ENCODE measurements at regions of chr15 and their contacts with region 1.

Region 1: GRCh38 chr15:75785771-75786574 is 57.3 kb upstream of the UBE2Q2 start:
- DNase-seq: peak; percentile 35 to 59 (median 43)
- ATAC-seq: peak; percentile 54; the same call in 1 of the 3 replicates
- H3K4me3 ChIP-seq: no peak overlapping the region
- H3K27ac ChIP-seq: no peak overlapping the region
- H3K4me1 ChIP-seq: peaks cover 0 to 8% of the 10 kb centered on the region in 2 experiments; a peak in 2 of 5 replicates
- H3K27me3 ChIP-seq: peaks cover 12 to 45% of the 10 kb centered on the region in 2 experiments
- CTCF ChIP-seq: peak; percentile 72 to 91 (median 78)
- EP300 ChIP-seq: no peak
- POLR2A ChIP-seq: no peak
- RAD21 ChIP-seq: peak; percentile 61 to 78

Region 2: GRCh38 chr15:75732809-75733451 is 53.0 kb before region 1 on chr15:
- CTCF ChIA-PET with region 1: no interaction called
- POLR2A ChIA-PET with region 1: no interaction called
- in situ Hi-C with region 1: loop called (anchors 5 kb)
- intact Hi-C with region 1: no loop called
- DNase-seq: peak; percentile 69 to 79 (median 70)
- ATAC-seq: peak; percentile 91
- H3K4me3 ChIP-seq: no peak overlapping the region
- H3K27ac ChIP-seq: no peak overlapping the region
- H3K4me1 ChIP-seq: peaks cover 3 to 30% of the 10 kb centered on the region in 2 experiments
- H3K27me3 ChIP-seq: 0 out of 5 replicates have a peak, but pooled peaks cover 0 to 5% of the 10 kb centered on the region in 2 experiments
- CTCF ChIP-seq: peak; percentile 79 to 90 (median 82)
- EP300 ChIP-seq: no peak
- POLR2A ChIP-seq: no peak
- RAD21 ChIP-seq: peak; percentile 42 to 70

Region 3: DNA sequence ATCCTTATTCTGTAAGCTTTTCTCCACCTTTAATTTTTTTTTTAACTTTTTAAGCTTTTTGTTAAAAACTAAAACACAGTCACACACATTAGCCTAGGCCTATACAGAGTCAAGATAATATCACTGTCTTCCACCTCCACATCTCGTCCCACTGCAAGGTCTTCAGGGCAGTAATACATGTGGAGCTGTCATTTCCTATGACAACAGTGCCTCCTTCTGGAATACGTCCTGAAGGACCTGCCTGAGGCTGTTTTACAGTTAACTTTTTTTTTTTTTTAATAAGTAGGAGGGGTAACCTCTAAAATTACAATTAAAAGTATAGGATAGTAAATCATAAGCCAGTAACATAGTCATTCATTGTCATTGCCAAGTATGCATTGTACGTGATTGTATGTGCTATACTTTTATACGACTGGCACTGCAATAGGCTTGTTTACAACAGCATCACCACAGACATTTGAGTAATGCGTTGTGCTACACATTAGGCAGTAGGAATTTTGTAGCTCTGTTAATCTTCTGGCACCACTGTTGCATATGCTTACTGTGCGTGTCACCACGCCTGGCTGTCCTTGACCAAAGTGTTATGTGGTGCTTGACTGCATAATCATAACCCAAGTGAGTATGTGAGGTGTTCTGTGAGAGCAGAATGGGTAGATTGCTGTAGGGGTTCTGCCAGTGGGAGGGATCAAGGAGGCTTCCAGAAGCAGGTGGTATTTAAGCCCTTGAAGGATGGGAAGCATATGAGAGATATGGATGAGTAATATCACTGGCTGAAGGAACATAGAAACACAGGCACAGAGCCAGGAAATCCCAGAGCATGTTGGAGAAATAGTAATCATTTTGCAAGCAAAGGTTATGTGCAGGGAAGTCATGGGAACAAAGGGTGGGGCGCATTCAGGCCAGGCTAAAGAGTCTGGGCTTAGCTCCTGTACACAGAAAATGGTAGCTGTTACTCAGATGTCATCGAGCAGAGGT is 136.0 kb after region 1 on chr15:
- CTCF ChIA-PET with region 1: interaction called, 15 read pairs
- POLR2A ChIA-PET with region 1: no interaction called
- in situ Hi-C with region 1: no loop called
- intact Hi-C with region 1: no loop called
- DNase-seq: peak in 2 of 4 experiments; percentile 38 to 84
- ATAC-seq: peak; percentile 99
- H3K4me3 ChIP-seq: no peak overlapping the region
- H3K27ac ChIP-seq: no peak overlapping the region
- H3K4me1 ChIP-seq: no peaks in the 10 kb centered on the region
- H3K27me3 ChIP-seq: no peaks in the 10 kb centered on the region
- CTCF ChIP-seq: peak; percentile 71 to 86 (median 72)
- EP300 ChIP-seq: no peak
- POLR2A ChIP-seq: no peak
- RAD21 ChIP-seq: peak; percentile 86 to 94

Region 4: DNA sequence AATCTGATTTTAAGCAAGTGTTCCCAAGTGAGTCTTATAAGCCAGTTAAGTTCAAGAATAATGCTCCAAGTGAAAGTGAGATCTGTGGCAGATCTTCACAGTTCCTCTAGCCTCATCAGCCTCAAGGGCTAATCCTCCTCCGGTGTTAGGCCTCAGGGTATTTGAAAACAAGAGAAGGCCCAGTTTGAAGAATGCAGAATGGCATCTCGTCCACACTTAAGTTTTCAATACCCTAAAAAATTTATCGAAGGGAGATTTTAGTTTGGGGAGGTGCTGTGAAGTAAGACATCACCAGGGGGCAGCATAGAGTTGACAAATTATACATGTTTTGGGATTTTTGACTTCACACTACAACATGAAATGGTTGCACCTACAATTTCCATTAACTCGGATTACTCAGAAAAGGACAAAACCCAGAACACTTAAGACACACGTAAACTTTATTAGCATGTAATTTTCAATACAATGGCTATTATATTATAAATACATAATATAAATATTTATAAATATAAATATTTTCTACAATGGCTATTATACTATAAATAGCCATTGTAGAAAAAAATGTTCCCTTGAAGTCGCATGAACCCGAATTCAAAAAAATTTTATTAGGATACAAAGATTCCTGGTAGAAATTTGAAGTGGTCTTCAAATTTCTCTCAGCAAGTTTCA is 271.5 kb after region 1 on chr15:
- CTCF ChIA-PET with region 1: no interaction called
- POLR2A ChIA-PET with region 1: no interaction called
- in situ Hi-C with region 1: no loop called
- intact Hi-C with region 1: loop called (anchors 10 kb)
- DNase-seq: peak; percentile 33 to 62 (median 48)
- ATAC-seq: no peak
- H3K4me3 ChIP-seq: no peak overlapping the region
- H3K27ac ChIP-seq: no peak overlapping the region
- H3K4me1 ChIP-seq: peaks cover 0 to 10% of the 10 kb centered on the region in 2 experiments; a peak in 3 of 5 replicates
- H3K27me3 ChIP-seq: peaks cover 37% of the 10 kb centered on the region in 2 experiments
- CTCF ChIP-seq: peak; percentile 62 to 74 (median 63)
- EP300 ChIP-seq: no peak
- POLR2A ChIP-seq: no peak
- RAD21 ChIP-seq: peak; percentile 36 to 65